ENCODE measurements at regions of chr16 and their contacts with region 1.

Region 1: GRCh38 chr16:2874912-2875362 is 8.1 kb upstream of the FLYWCH2 start:
- DNase-seq: peak; percentile 49
- ATAC-seq: peak; percentile 97
- H3K4me3 ChIP-seq: peak overlapping the region in 1 of 3 experiments; percentile 58; a peak in 2 of 6 replicates
- H3K27ac ChIP-seq: no peak overlapping the region
- H3K4me1 ChIP-seq: peaks cover 19% of the 10 kb centered on the region
- H3K27me3 ChIP-seq: no peaks in the 10 kb centered on the region; a peak in 1 of 5 replicates
- CTCF ChIP-seq: peak; percentile 94
- EP300 ChIP-seq: no peak
- POLR2A ChIP-seq: no peak
- RAD21 ChIP-seq: peak; percentile 89

Region 2: GRCh38 chr16:2905431-2906387 is 30.8 kb after region 1 on chr16:
- CTCF ChIA-PET with region 1: interaction called, 7 read pairs
- POLR2A ChIA-PET with region 1: interaction called, 9 read pairs
- in situ Hi-C with region 1: loop called (anchors 5 kb)
- intact Hi-C with region 1: loop called (anchors 2 kb)
- DNase-seq: peak; percentile 97
- ATAC-seq: peak; percentile 81
- H3K4me3 ChIP-seq: peak overlapping the region; percentile 82 to 96 (median 95); a peak in 5 of 6 replicates
- H3K27ac ChIP-seq: peak overlapping the region; percentile 83
- H3K4me1 ChIP-seq: peaks cover 19% of the 10 kb centered on the region
- H3K27me3 ChIP-seq: no peaks in the 10 kb centered on the region; a peak in 1 of 5 replicates
- CTCF ChIP-seq: no peak
- EP300 ChIP-seq: no peak
- POLR2A ChIP-seq: no peak
- RAD21 ChIP-seq: no peak

Region 3: DNA sequence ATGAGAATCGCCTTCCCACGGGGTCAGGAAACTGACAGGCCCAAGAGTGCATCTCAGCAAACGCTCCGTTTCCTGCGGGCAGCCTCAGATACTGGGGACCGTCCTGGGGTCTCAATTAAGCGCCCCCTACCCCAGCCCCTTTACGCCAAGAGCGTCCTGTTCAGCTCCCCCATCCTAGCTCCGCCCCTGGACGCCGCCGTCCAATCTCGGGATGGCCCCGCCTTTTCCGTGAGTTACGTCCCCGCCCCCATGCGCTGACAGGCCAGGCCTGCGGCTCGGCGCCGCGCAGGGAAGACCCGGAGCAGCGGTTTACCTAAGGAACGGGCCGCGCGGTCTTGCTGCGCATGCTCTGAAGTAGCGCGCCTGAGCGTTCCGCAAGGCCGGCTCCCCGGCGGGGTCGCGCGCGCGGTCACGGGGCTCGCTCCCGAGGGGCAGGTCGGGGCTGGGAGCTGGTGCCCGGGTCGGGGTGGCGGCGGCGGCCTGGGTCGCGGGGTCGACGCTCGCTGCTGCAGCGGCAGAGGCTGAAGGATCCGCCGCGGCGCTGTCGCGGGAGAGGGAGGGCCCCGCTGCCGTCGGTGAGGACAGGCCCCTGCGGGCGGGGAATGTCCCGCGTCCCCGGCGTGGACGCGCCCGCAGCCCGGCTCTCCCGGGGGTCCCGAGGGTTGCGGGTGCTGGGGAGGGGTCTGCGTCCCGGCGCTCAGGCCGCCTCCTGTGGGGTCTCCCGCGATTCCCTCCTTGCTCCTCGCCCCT is 36.8 kb after region 1 on chr16 and contains the start of gene FLYWCH1:
- CTCF ChIA-PET with region 1: interaction called, 5 read pairs
- POLR2A ChIA-PET with region 1: interaction called, 9 read pairs
- in situ Hi-C with region 1: loop called (anchors 5 kb)
- intact Hi-C with region 1: no loop called
- DNase-seq: peak; percentile 92
- ATAC-seq: peak; percentile 93
- H3K4me3 ChIP-seq: peak within 1 kb of the TSS; percentile 65 to 76 (median 76)
- H3K27ac ChIP-seq: peak within 1 kb of the TSS; percentile 44
- H3K4me1 ChIP-seq: peaks cover 18% of the 10 kb centered on the region
- H3K27me3 ChIP-seq: no peaks in the 10 kb centered on the region; a peak in 1 of 5 replicates
- CTCF ChIP-seq: 0 out of 2 replicates have a peak, but pooled peaks have one; percentile 24
- EP300 ChIP-seq: peak in 1 of 2 experiments; percentile 15; a peak in 1 of 4 replicates
- POLR2A ChIP-seq: peak; percentile 24 to 71; a peak in 2 of 4 replicates
- RAD21 ChIP-seq: peak; percentile 58; the same call in 1 of the 2 replicates
- total RNA-seq, gene FLYWCH1: 9.9 and 12.4 TPM in 2 replicates

Region 4: DNA sequence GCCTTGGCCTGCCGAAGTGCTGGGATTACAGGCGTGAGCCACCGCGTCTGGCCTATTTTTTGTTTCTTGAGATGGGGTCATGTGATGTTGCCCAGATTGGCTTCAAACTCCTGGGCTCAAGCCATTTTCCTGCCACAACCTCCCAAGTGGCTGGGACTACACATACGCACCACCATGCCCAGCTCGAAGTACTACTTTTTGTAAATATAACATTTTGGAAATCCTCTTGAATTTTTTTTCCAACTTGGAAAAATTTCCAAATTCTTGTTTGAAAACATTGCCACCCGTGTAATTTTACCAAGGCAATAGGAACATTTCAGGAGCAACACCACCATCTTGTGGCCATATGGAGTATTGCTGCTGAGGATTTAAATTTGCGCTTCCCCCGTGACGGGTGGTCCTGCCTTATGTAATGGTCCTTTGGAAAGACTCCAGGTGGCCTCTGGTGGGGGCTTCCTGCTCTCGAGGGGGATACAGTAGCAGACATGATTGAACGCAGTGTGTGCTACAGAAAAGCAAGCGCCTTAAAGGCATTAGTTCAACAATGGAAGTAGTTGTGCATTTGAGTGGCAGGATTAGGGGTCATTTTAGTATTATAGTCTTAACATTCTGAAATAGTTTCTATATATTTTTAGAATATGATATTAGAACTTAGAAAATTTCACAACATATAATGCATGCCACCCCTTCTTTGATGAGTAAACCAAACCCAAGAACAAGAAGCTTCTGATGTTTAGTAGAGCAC is 44.7 kb after region 1 on chr16:
- CTCF ChIA-PET with region 1: interaction called, 24 read pairs
- POLR2A ChIA-PET with region 1: no interaction called
- in situ Hi-C with region 1: loop called (anchors 5 kb)
- intact Hi-C with region 1: loop called (anchors 2 kb)
- DNase-seq: peak; percentile 55
- ATAC-seq: no peak
- H3K4me3 ChIP-seq: no peak overlapping the region
- H3K27ac ChIP-seq: no peak overlapping the region
- H3K4me1 ChIP-seq: no peaks in the 10 kb centered on the region
- H3K27me3 ChIP-seq: no peaks in the 10 kb centered on the region
- CTCF ChIP-seq: peak; percentile 79
- EP300 ChIP-seq: no peak
- POLR2A ChIP-seq: no peak
- RAD21 ChIP-seq: peak; percentile 78

Region 5: DNA sequence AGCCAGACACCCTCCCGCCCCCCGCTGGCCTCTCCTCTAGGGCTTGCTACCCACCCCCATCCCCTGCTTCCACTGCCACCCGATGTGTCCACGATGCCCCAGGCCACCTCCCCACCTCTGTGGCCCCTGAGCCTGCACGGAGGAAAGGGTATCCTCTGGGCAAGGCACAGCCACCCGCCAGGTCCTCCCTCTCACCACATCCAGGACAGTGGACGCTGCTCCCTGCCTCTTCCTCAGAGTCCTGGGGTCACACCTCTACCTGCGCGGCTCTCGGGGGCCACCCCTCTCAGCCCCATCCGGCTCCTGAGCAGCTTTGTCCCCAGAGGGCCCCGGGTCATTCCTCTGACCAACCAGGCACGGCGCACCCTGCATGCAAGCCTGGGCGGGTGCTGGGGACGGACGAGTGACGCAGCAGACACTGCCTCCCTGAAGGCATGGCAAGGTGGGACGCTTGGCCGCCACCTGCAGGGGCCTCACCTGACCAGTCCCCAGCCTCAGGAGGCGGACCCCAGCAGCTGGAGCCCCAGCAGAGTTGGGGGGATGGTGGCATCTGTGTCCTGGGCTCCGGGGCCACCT is 61.6 kb after region 1 on chr16:
- CTCF ChIA-PET with region 1: no interaction called
- POLR2A ChIA-PET with region 1: no interaction called
- in situ Hi-C with region 1: no loop called
- intact Hi-C with region 1: no loop called
- DNase-seq: no peak
- ATAC-seq: no peak
- H3K4me3 ChIP-seq: no peak overlapping the region
- H3K27ac ChIP-seq: no peak overlapping the region
- H3K4me1 ChIP-seq: no peaks in the 10 kb centered on the region
- H3K27me3 ChIP-seq: no peaks in the 10 kb centered on the region
- CTCF ChIP-seq: no peak
- EP300 ChIP-seq: no peak
- POLR2A ChIP-seq: no peak
- RAD21 ChIP-seq: no peak

Measured in HepG2 (cell line).